ENCODE measurements at regions of chr5 and their contacts with region 1.

Region 1: GRCh38 chr5:90783460-90784333 is 225.1 kb downstream of the ADGRV1 start:
- DNase-seq: peak; percentile 45 to 77
- ATAC-seq: peak; percentile 74 to 86 (median 78)
- H3K4me3 ChIP-seq: no peak overlapping the region
- H3K4me3 Mint-ChIP-seq: no peak overlapping the region
- H3K27ac ChIP-seq: no peak overlapping the region
- H3K27ac Mint-ChIP-seq: no peak overlapping the region
- H3K4me1 ChIP-seq: no peaks in the 10 kb centered on the region
- H3K4me1 Mint-ChIP-seq: no peaks in the 10 kb centered on the region
- H3K27me3 ChIP-seq: no peaks in the 10 kb centered on the region
- H3K27me3 Mint-ChIP-seq: peaks cover 0 to 17% of the 10 kb centered on the region in 2 donors
- CTCF ChIP-seq: peak; percentile 88

Region 2: DNA sequence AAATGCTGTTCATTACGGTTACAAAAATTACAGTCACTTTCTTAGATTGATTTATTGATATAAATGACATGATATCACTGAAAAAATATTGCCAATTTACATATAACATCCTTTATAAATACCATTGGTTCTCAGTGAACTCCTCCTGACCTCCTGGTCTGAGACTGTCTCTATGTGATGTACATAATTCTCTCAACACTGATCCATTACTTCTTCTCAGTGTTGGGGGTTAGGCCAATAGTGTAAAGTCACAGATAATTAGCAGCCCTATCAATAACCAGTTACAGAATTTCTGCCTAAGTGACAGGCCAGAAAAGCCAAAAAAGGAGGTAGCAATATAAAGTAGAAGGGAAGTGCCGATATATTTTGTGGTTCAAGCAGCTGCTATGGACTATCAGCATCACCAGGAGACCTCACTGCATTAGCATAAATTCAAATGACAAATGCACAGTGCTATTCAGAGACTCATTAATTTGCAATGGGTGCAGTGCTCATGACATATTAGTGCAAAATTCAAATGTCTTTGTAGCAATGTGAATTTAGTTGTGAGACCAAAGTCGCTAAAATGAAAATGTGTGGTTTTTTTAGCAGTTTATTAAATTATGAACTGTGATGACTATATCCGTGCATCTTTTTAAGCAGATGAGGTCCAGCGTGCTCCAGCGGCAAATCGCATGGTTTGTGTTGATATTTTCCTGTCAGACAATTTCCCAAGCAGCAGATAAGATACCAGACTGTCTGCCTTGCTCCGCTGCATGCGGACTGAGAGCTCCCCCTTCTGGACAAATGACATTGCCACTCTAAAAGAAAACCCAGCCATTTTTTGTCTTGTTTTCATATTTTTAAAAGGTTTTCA is 518.8 kb before region 1 on chr5:
- intact Hi-C with region 1: loop called (anchors 2 kb)
- DNase-seq: peak; percentile 34 to 67
- ATAC-seq: peak; percentile 46 to 76 (median 66)
- H3K4me3 ChIP-seq: no peak overlapping the region
- H3K4me3 Mint-ChIP-seq: no peak overlapping the region
- H3K27ac ChIP-seq: no peak overlapping the region
- H3K27ac Mint-ChIP-seq: no peak overlapping the region
- H3K4me1 ChIP-seq: peaks cover 3% of the 10 kb centered on the region
- H3K4me1 Mint-ChIP-seq: no peaks in the 10 kb centered on the region
- H3K27me3 ChIP-seq: no peaks in the 10 kb centered on the region
- H3K27me3 Mint-ChIP-seq: peaks cover 0 to 11% of the 10 kb centered on the region in 2 donors
- CTCF ChIP-seq: peak; percentile 95

Region 3: DNA sequence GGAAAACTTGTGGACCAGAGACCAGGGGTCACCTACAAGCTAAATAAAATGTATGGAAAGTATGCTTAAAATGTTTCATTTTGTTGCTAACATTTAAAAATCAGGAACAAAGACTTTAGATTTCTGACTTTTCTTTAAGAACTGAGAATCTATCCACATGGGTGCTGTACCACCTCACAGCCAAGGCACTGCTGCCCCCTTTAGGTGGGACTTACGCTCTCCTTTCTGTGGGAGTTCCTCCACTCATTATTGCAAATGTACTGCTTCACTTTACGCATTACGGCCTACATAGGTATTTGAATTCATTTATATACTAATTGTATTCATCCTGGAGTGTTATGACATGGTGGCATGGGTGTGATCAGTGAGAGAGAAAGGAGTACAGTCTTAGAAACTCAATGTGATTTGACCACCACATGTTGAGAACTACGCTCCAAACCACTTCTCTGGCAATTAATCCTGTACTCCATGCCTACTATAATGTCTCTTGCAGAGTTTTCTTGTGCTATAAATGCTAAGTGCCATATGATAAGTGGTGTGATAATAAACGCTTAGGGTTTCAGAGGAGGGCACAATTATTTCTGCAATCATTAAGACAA is 349.5 kb before region 1 on chr5:
- intact Hi-C with region 1: loop called (anchors 1 kb)
- DNase-seq: peak in 1 of 2 donors; percentile 66
- ATAC-seq: peak in 2 of 3 donors; percentile 47
- H3K4me3 ChIP-seq: no peak overlapping the region
- H3K4me3 Mint-ChIP-seq: no peak overlapping the region
- H3K27ac ChIP-seq: no peak overlapping the region
- H3K27ac Mint-ChIP-seq: no peak overlapping the region
- H3K4me1 ChIP-seq: no peaks in the 10 kb centered on the region
- H3K4me1 Mint-ChIP-seq: no peaks in the 10 kb centered on the region
- H3K27me3 ChIP-seq: no peaks in the 10 kb centered on the region
- H3K27me3 Mint-ChIP-seq: peaks cover 7 to 15% of the 10 kb centered on the region in 2 donors
- CTCF ChIP-seq: no peak

Region 4: DNA sequence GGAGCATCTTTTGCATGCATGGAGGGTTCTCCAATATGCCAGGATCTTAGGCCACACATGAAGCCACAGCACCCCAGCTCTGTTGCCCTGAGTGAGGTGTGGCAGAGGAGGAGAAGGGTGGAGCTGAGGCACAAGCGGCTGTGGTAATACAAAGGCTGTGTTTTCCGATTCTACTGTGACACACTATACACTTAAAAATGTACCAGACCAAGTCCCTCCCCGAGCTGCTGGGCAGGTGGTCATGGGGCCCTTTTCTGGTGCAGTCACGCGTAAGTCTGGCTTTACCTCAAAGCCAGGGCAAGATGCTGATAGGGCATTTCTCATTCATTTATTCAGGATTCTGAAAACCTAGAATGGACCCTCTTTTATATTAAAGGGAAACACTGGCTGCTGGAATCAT is 221.4 kb before region 1 on chr5:
- intact Hi-C with region 1: no loop called
- DNase-seq: no peak
- ATAC-seq: no peak
- H3K4me3 ChIP-seq: no peak overlapping the region
- H3K4me3 Mint-ChIP-seq: no peak overlapping the region
- H3K27ac ChIP-seq: no peak overlapping the region
- H3K27ac Mint-ChIP-seq: no peak overlapping the region
- H3K4me1 ChIP-seq: peaks cover 5% of the 10 kb centered on the region
- H3K4me1 Mint-ChIP-seq: peaks cover 0 to 13% of the 10 kb centered on the region in 2 donors
- H3K27me3 ChIP-seq: peaks cover 22% of the 10 kb centered on the region
- H3K27me3 Mint-ChIP-seq: peaks cover 27 to 65% of the 10 kb centered on the region in 2 donors
- CTCF ChIP-seq: no peak

Region 5: GRCh38 chr5:90680881-90681563 is 102.7 kb before region 1 on chr5:
- intact Hi-C with region 1: no loop called
- DNase-seq: no peak
- ATAC-seq: no peak
- H3K4me3 ChIP-seq: no peak overlapping the region
- H3K4me3 Mint-ChIP-seq: no peak overlapping the region
- H3K27ac ChIP-seq: no peak overlapping the region
- H3K27ac Mint-ChIP-seq: no peak overlapping the region
- H3K4me1 ChIP-seq: no peaks in the 10 kb centered on the region
- H3K4me1 Mint-ChIP-seq: no peaks in the 10 kb centered on the region
- H3K27me3 ChIP-seq: no peaks in the 10 kb centered on the region
- H3K27me3 Mint-ChIP-seq: no peaks in the 10 kb centered on the region
- CTCF ChIP-seq: no peak

Region 6: GRCh38 chr5:90834711-90835110 is 51.0 kb after region 1 on chr5:
- intact Hi-C with region 1: no loop called
- DNase-seq: no peak
- ATAC-seq: no peak
- H3K4me3 ChIP-seq: no peak overlapping the region
- H3K4me3 Mint-ChIP-seq: no peak overlapping the region
- H3K27ac ChIP-seq: no peak overlapping the region
- H3K27ac Mint-ChIP-seq: no peak overlapping the region
- H3K4me1 ChIP-seq: no peaks in the 10 kb centered on the region
- H3K4me1 Mint-ChIP-seq: no peaks in the 10 kb centered on the region
- H3K27me3 ChIP-seq: no peaks in the 10 kb centered on the region
- H3K27me3 Mint-ChIP-seq: peaks cover 9% of the 10 kb centered on the region in 2 donors
- CTCF ChIP-seq: no peak

Measured in natural killer cell (primary cell).